Tibial artery (tissue), 4 donors: ENCODE measurements at regions of chr7 and their contacts with region 1.

Region 1: GRCh38 chr7:36448781-36449379 is 59.2 kb downstream of the ANLN start:
- DNase-seq: no peak
- H3K4me3 ChIP-seq: no peak overlapping the region
- H3K27ac ChIP-seq: no peak overlapping the region
- H3K4me1 ChIP-seq: no peaks in the 10 kb centered on the region
- H3K27me3 ChIP-seq: no peaks in the 10 kb centered on the region
- CTCF ChIP-seq: no peak

Region 2: GRCh38 chr7:36430186-36430585 is 18.7 kb before region 1 on chr7:
- intact Hi-C with region 1: loop called (anchors 1 kb)
- DNase-seq: no peak
- H3K4me3 ChIP-seq: no peak overlapping the region
- H3K27ac ChIP-seq: no peak overlapping the region
- H3K4me1 ChIP-seq: no peaks in the 10 kb centered on the region
- H3K27me3 ChIP-seq: no peaks in the 10 kb centered on the region
- CTCF ChIP-seq: no peak